Breast epithelium (tissue), 4 donors: ENCODE measurements at regions of chr3 and their contacts with region 1.

Region 1: GRCh38 chr3:170656284-170656683 is 70.4 kb upstream of the SLC7A14 start:
- DNase-seq: no peak
- H3K4me3 ChIP-seq: no peak overlapping the region
- H3K27ac ChIP-seq: no peak overlapping the region
- H3K4me1 ChIP-seq: no peaks in the 10 kb centered on the region
- H3K27me3 ChIP-seq: no peaks in the 10 kb centered on the region
- CTCF ChIP-seq: no peak
- POLR2A ChIP-seq: no peak

Region 2: GRCh38 chr3:170641510-170642236 is 14.6 kb before region 1 on chr3:
- intact Hi-C with region 1: no loop called
- DNase-seq: no peak
- H3K4me3 ChIP-seq: no peak overlapping the region
- H3K27ac ChIP-seq: no peak overlapping the region
- H3K4me1 ChIP-seq: no peaks in the 10 kb centered on the region
- H3K27me3 ChIP-seq: no peaks in the 10 kb centered on the region
- CTCF ChIP-seq: no peak
- POLR2A ChIP-seq: no peak

Region 3: GRCh38 chr3:170953229-170953628 is 296.9 kb after region 1 on chr3:
- intact Hi-C with region 1: no loop called
- DNase-seq: no peak
- H3K4me3 ChIP-seq: no peak overlapping the region
- H3K27ac ChIP-seq: no peak overlapping the region
- H3K4me1 ChIP-seq: no peaks in the 10 kb centered on the region
- H3K27me3 ChIP-seq: no peaks in the 10 kb centered on the region
- CTCF ChIP-seq: no peak
- POLR2A ChIP-seq: no peak

Region 4: GRCh38 chr3:172279191-172279640 is 1622.9 kb after region 1 on chr3:
- intact Hi-C with region 1: loop called (anchors 5 kb)
- DNase-seq: no peak
- H3K4me3 ChIP-seq: no peak overlapping the region
- H3K27ac ChIP-seq: peak overlapping the region; percentile 49 to 57
- H3K4me1 ChIP-seq: peaks cover 0 to 4% of the 10 kb centered on the region in 2 donors
- H3K27me3 ChIP-seq: no peaks in the 10 kb centered on the region
- CTCF ChIP-seq: no peak
- POLR2A ChIP-seq: no peak